CD4-positive, alpha-beta memory T cell (primary cell): ENCODE measurements at regions of chr9 and their contacts with region 1.

Region 1: GRCh38 chr9:5437254-5438216 is at the start of gene PLGRKT:
- DNase-seq: peak; percentile 89 to 95 (median 91)
- H3K4me3 ChIP-seq: peak within 1 kb of the TSS; percentile 71 to 83
- H3K4me3 Mint-ChIP-seq: peak within 1 kb of the TSS; percentile 91 to 98 (median 94)
- H3K27ac ChIP-seq: peak within 1 kb of the TSS; percentile 92
- H3K27ac Mint-ChIP-seq: peak within 1 kb of the TSS; percentile 99 to 100 (median 99)
- H3K4me1 ChIP-seq: peaks cover 23% of the 10 kb centered on the region
- H3K4me1 Mint-ChIP-seq: peaks cover 25 to 46% (median 36%) of the 10 kb centered on the region in 4 donors
- H3K27me3 ChIP-seq: no peaks in the 10 kb centered on the region
- H3K27me3 Mint-ChIP-seq: no peaks in the 10 kb centered on the region
- total RNA-seq, gene PLGRKT: 20.0 to 21.7 TPM

Region 2: DNA sequence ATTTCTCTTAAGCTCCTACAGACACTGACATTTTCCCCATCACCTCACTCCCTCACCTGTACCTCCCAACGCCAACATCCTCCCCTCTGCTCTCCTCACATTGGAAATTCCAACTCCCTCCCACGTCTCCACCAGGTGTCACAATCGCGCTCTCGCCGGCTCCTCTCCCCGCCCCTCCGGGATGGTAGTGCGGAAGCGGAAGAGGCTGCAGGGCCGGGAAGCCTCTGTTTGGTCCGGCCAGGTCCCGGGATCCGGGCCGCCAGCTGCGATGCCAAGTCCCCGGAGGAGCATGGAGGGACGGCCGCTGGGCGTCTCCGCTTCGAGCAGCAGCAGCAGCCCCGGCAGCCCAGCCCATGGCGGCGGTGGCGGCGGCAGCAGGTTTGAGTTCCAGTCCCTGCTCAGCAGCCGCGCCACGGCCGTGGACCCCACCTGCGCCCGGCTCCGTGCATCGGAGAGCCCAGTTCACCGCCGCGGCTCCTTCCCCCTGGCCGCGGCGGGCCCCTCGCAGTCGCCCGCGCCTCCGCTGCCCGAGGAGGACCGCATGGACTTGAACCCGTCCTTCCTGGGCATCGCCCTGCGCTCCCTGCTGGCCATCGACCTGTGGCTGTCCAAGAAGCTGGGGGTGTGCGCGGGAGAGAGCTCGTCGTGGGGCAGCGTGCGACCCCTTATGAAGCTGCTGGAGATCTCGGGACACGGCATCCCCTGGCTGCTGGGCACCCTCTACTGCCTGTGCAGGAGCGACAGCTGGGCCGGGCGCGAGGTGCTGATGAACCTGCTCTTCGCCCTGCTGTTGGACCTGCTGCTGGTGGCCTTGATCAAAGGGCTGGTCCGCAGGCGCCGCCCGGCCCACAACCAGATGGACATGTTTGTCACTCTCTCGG is 775.2 kb before region 1 on chr9 and contains the start of gene PLPP6:
- CTCF ChIA-PET with region 1: no interaction called
- POLR2A ChIA-PET with region 1: no interaction called
- intact Hi-C with region 1: loop called (anchors 5 kb)
- DNase-seq: peak; percentile 70 to 86 (median 76)
- H3K4me3 ChIP-seq: peak within 1 kb of the TSS; percentile 42 to 83
- H3K4me3 Mint-ChIP-seq: peak within 1 kb of the TSS; percentile 91 to 99 (median 96)
- H3K27ac ChIP-seq: peak within 1 kb of the TSS; percentile 67
- H3K27ac Mint-ChIP-seq: peak within 1 kb of the TSS; percentile 95 to 99 (median 96)
- H3K4me1 ChIP-seq: peaks cover 58% of the 10 kb centered on the region
- H3K4me1 Mint-ChIP-seq: peaks cover 47 to 78% (median 59%) of the 10 kb centered on the region in 4 donors
- H3K27me3 ChIP-seq: no peaks in the 10 kb centered on the region
- H3K27me3 Mint-ChIP-seq: no peaks in the 10 kb centered on the region
- total RNA-seq, gene PLPP6: 23.3 to 23.8 TPM

Region 3: DNA sequence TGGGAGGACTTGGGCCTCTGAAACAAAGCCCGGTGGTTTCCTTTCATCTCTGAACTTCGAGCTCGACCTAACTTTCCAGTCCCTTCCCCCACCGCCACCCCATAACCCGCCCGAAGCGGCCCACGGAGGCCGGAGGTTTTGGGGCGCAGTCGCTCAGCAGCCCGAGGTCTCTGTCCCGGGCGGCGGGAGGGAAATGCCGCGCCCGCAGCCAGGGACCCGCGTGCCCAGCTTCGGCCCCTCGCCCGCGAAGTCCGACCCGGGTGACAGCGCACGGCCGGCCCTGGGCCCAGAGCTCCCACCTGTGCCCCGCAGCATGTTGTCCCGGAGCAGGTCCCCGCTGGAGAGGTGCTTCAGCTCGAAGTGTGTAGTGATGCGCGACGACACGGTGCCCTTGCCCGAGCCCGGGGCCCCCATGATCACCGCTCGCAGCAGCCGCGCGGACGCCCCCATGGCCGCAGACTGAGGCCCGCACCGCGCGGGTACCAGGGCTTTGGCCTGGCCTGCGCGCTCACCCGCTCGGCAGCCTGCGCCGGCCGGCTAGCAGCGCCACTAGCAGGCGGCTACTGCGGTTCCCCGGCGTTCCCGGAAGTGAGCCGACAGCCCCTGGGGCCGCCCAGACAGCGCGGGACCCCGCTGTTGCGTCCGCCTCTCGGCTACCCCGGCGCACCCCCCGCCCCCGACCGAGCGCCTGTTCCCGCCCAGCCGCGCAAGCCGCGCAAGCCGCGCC is 696.7 kb before region 1 on chr9 and contains the start of gene AK3:
- CTCF ChIA-PET with region 1: no interaction called
- POLR2A ChIA-PET with region 1: interaction called, 9 read pairs
- intact Hi-C with region 1: loop called (anchors 5 kb)
- DNase-seq: peak; percentile 82 to 87 (median 84)
- H3K4me3 ChIP-seq: peak within 1 kb of the TSS; percentile 79 to 84
- H3K4me3 Mint-ChIP-seq: peak within 1 kb of the TSS; percentile 91 to 97 (median 94)
- H3K27ac ChIP-seq: peak within 1 kb of the TSS; percentile 78
- H3K27ac Mint-ChIP-seq: peak within 1 kb of the TSS; percentile 65 to 96 (median 94)
- H3K4me1 ChIP-seq: peaks cover 29% of the 10 kb centered on the region
- H3K4me1 Mint-ChIP-seq: peaks cover 20 to 44% (median 32%) of the 10 kb centered on the region in 4 donors
- H3K27me3 ChIP-seq: no peaks in the 10 kb centered on the region
- H3K27me3 Mint-ChIP-seq: no peaks in the 10 kb centered on the region
- total RNA-seq, gene AK3: 23.1 to 25.2 TPM

Region 4: GRCh38 chr9:4792572-4793458 is 644.7 kb before region 1 on chr9 and contains the start of gene RCL1:
- CTCF ChIA-PET with region 1: no interaction called
- POLR2A ChIA-PET with region 1: no interaction called
- intact Hi-C with region 1: loop called (anchors 5 kb)
- DNase-seq: peak; percentile 95 to 98 (median 97)
- H3K4me3 ChIP-seq: peak within 1 kb of the TSS; percentile 83 to 88
- H3K4me3 Mint-ChIP-seq: peak within 1 kb of the TSS; percentile 93 to 97 (median 95)
- H3K27ac ChIP-seq: peak within 1 kb of the TSS; percentile 70
- H3K27ac Mint-ChIP-seq: peak within 1 kb of the TSS; percentile 84 to 97 (median 96)
- H3K4me1 ChIP-seq: peaks cover 23% of the 10 kb centered on the region
- H3K4me1 Mint-ChIP-seq: peaks cover 29 to 52% (median 38%) of the 10 kb centered on the region in 4 donors
- H3K27me3 ChIP-seq: no peaks in the 10 kb centered on the region
- H3K27me3 Mint-ChIP-seq: peaks cover 0 to 4% of the 10 kb centered on the region in 2 donors
- total RNA-seq, gene RCL1: 15.2 to 17.8 TPM

Region 5: DNA sequence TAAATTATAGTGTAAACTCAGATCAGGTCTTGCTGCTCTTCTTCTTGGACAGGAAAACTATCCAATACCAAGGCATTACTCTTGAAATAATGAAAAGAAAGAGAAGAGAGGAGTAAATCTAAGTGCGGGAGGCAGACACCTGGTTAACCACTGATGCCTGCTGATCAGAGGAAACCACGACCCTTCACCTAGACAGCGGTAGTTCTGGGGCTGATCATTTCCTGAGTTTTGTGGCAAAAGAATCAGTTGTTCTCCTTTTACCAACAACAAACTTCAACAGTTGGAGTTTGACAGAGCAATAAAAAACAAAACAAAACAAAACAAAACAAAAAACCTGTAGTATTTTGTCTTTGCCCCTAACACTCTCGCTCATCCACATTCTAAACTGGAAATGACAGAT is 100.8 kb before region 1 on chr9:
- CTCF ChIA-PET with region 1: no interaction called
- POLR2A ChIA-PET with region 1: interaction called, 5 read pairs
- intact Hi-C with region 1: loop called (anchors 5 kb)
- DNase-seq: peak; percentile 55 to 69 (median 65)
- H3K4me3 ChIP-seq: peak overlapping the region; percentile 2 to 17
- H3K4me3 Mint-ChIP-seq: peak overlapping the region; percentile 73 to 87 (median 78)
- H3K27ac ChIP-seq: peak overlapping the region; percentile 18
- H3K27ac Mint-ChIP-seq: peak overlapping the region; percentile 82 to 96 (median 88)
- H3K4me1 ChIP-seq: peaks cover 32% of the 10 kb centered on the region
- H3K4me1 Mint-ChIP-seq: peaks cover 28 to 54% (median 42%) of the 10 kb centered on the region in 4 donors
- H3K27me3 ChIP-seq: no peaks in the 10 kb centered on the region
- H3K27me3 Mint-ChIP-seq: no peaks in the 10 kb centered on the region

Region 6: DNA sequence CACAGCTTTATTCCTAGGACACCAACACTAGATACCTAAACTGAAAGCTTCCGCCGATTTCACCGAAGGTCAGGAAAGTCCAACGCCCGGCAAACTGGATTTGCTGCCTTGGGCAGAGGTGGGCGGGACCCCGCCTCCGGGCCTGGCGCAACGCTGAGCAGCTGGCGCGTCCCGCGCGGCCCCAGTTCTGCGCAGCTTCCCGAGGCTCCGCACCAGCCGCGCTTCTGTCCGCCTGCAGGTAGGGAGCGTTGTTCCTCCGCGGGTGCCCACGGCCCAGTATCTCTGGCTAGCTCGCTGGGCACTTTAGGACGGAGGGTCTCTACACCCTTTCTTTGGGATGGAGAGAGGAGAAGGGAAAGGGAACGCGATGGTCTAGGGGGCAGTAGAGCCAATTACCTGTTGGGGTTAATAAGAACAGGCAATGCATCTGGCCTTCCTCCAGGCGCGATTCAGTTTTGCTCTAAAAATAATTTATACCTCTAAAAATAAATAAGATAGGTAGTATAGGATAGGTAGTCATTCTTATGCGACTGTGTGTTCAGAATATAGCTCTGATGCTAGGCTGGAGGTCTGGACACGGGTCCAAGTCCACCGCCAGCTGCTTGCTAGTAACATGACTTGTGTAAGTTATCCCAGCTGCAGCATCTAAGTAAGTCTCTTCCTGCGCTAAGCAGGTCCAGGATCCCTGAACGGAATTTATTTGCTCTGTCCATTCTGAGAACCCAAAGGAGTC is 13.0 kb after region 1 on chr9 and contains the start of gene CD274:
- CTCF ChIA-PET with region 1: interaction called, 79 read pairs
- POLR2A ChIA-PET with region 1: interaction called, 136 read pairs
- intact Hi-C with region 1: loop called (anchors 1 kb)
- DNase-seq: peak; percentile 78 to 82 (median 80)
- H3K4me3 ChIP-seq: peak within 1 kb of the TSS; percentile 65 to 67
- H3K4me3 Mint-ChIP-seq: peak within 1 kb of the TSS; percentile 87 to 96 (median 94)
- H3K27ac ChIP-seq: peak within 1 kb of the TSS; percentile 97
- H3K27ac Mint-ChIP-seq: peak within 1 kb of the TSS; percentile 92 to 99 (median 95)
- H3K4me1 ChIP-seq: peaks cover 77% of the 10 kb centered on the region
- H3K4me1 Mint-ChIP-seq: peaks cover 50 to 89% (median 62%) of the 10 kb centered on the region in 4 donors
- H3K27me3 ChIP-seq: no peaks in the 10 kb centered on the region
- H3K27me3 Mint-ChIP-seq: no peaks in the 10 kb centered on the region
- total RNA-seq, gene CD274: 16.2 to 23.0 TPM

Region 7: GRCh38 chr9:5593904-5594303 is 156.4 kb after region 1 on chr9:
- CTCF ChIA-PET with region 1: interaction called, 44 read pairs
- POLR2A ChIA-PET with region 1: interaction called, 19 read pairs
- intact Hi-C with region 1: loop called (anchors 1 kb)
- DNase-seq: no peak
- H3K4me3 ChIP-seq: no peak overlapping the region
- H3K4me3 Mint-ChIP-seq: no peak overlapping the region
- H3K27ac ChIP-seq: no peak overlapping the region
- H3K27ac Mint-ChIP-seq: peak overlapping the region in 2 of 7 donors; percentile 3 to 15
- H3K4me1 ChIP-seq: peaks cover 5% of the 10 kb centered on the region
- H3K4me1 Mint-ChIP-seq: peaks cover 7 to 13% (median 8%) of the 10 kb centered on the region in 4 donors
- H3K27me3 ChIP-seq: no peaks in the 10 kb centered on the region
- H3K27me3 Mint-ChIP-seq: no peaks in the 10 kb centered on the region